ENCODE measurements at regions of chr12 and their contacts with region 1.

Region 1: GRCh38 chr12:124567661-124568373 is 405 bp upstream of the NCOR2 start:
- DNase-seq: peak; percentile 87
- H3K4me3 Mint-ChIP-seq: peak overlapping the region; percentile 74
- H3K27ac Mint-ChIP-seq: peak overlapping the region; percentile 7
- H3K4me1 Mint-ChIP-seq: peaks cover 12% of the 10 kb centered on the region
- H3K27me3 Mint-ChIP-seq: peaks cover 2% of the 10 kb centered on the region

Region 2: GRCh38 chr12:124545508-124546418 is 22.1 kb before region 1 on chr12:
- CTCF ChIA-PET with region 1: no interaction called
- POLR2A ChIA-PET with region 1: interaction called, 16 read pairs
- DNase-seq: peak; percentile 75
- H3K4me3 Mint-ChIP-seq: peak overlapping the region; percentile 24
- H3K27ac Mint-ChIP-seq: peak overlapping the region; percentile 47
- H3K4me1 Mint-ChIP-seq: peaks cover 46% of the 10 kb centered on the region
- H3K27me3 Mint-ChIP-seq: peaks cover 2% of the 10 kb centered on the region

Region 3: GRCh38 chr12:124554429-124555029 is 13.3 kb before region 1 on chr12:
- CTCF ChIA-PET with region 1: no interaction called
- POLR2A ChIA-PET with region 1: interaction called, 13 read pairs
- DNase-seq: no peak
- H3K4me3 Mint-ChIP-seq: no peak overlapping the region
- H3K27ac Mint-ChIP-seq: no peak overlapping the region
- H3K4me1 Mint-ChIP-seq: peaks cover 15% of the 10 kb centered on the region
- H3K27me3 Mint-ChIP-seq: no peaks in the 10 kb centered on the region

Measured in activated CD4-positive, alpha-beta memory T cell treated with anti-CD3 and anti-CD28 coated beads, Interleukin-2, amount 10 ng/mL, durations not matched to agents 7 days and 5 days (primary cell).